ENCODE measurements at regions of chr10 and their contacts with region 1.

Region 1: GRCh38 chr10:24238519-24239252 is 29.7 kb downstream of the KIAA1217 start:
- DNase-seq: peak; percentile 87 to 88
- H3K4me3 ChIP-seq: peak overlapping the region; percentile 35
- H3K4me3 Mint-ChIP-seq: peak overlapping the region; percentile 89
- H3K27ac Mint-ChIP-seq: peak overlapping the region; percentile 97
- H3K4me1 ChIP-seq: peaks cover 44% of the 10 kb centered on the region
- H3K4me1 Mint-ChIP-seq: peaks cover 74% of the 10 kb centered on the region
- H3K27me3 ChIP-seq: no peaks in the 10 kb centered on the region
- H3K27me3 Mint-ChIP-seq: no peaks in the 10 kb centered on the region
- CTCF ChIP-seq: no peak

Region 2: GRCh38 chr10:24272374-24272773 is 33.7 kb after region 1 on chr10:
- CTCF ChIA-PET with region 1: no interaction called
- POLR2A ChIA-PET with region 1: no interaction called
- intact Hi-C with region 1: loop called (anchors 1 kb)
- DNase-seq: peak in 1 of 2 experiments; percentile 41
- H3K4me3 ChIP-seq: no peak overlapping the region
- H3K4me3 Mint-ChIP-seq: peak overlapping the region; percentile 57
- H3K27ac Mint-ChIP-seq: peak overlapping the region; percentile 45
- H3K4me1 ChIP-seq: peaks cover 32% of the 10 kb centered on the region
- H3K4me1 Mint-ChIP-seq: peaks cover 31% of the 10 kb centered on the region
- H3K27me3 ChIP-seq: no peaks in the 10 kb centered on the region
- H3K27me3 Mint-ChIP-seq: no peaks in the 10 kb centered on the region
- CTCF ChIP-seq: no peak

Region 3: DNA sequence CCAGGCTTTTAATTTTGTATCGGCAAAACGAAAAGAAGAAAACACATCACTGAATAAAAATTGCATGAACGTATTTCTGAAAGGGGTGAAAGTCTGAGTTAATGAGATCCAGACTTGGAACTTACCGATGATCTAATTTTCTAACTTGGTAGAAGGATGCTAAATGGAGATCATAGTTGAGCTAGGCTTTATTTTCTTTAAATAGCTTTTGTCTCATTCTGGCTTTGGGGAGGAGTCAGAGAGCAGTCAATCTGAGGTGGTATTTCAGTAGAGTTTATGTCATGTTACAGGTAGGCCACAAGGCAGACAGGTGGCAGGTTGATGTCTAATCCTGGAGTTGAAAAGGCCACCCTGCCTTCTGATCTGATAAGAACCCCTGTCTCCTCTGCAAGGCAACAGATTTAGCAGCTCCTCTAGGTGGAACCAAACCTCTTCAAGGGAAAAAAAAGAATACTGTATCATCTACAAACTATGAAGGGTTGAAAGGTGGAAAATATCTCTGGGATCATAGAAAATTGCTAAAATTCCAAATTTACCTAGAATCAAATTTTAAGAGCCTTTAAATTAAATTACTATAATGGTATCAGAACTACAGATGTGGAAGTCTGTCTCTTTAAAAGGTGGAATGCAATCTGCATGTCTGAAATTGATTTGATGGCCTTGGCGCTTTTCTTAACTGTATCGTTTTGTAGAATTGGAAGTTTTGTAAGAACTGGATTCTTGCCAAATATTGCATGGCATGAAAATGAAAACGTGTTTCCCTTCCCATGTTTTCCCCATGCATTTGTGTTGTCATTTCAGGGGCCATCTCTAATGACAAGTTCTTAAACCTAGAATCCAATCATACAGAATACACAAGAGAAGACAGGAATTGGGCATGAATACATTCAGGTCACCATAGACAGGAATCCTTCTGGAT is 132.4 kb after region 1 on chr10:
- CTCF ChIA-PET with region 1: no interaction called
- POLR2A ChIA-PET with region 1: no interaction called
- intact Hi-C with region 1: loop called (anchors 1 kb)
- DNase-seq: peak in 1 of 2 experiments; percentile 43
- H3K4me3 ChIP-seq: no peak overlapping the region
- H3K4me3 Mint-ChIP-seq: no peak overlapping the region
- H3K27ac Mint-ChIP-seq: no peak overlapping the region
- H3K4me1 ChIP-seq: peaks cover 25% of the 10 kb centered on the region
- H3K4me1 Mint-ChIP-seq: peaks cover 27% of the 10 kb centered on the region
- H3K27me3 ChIP-seq: no peaks in the 10 kb centered on the region
- H3K27me3 Mint-ChIP-seq: no peaks in the 10 kb centered on the region
- CTCF ChIP-seq: peak in 1 of 2 experiments; percentile 33